WTC11 (cell line): ENCODE measurements at regions of chr7 and their contacts with region 1.

Region 1: DNA sequence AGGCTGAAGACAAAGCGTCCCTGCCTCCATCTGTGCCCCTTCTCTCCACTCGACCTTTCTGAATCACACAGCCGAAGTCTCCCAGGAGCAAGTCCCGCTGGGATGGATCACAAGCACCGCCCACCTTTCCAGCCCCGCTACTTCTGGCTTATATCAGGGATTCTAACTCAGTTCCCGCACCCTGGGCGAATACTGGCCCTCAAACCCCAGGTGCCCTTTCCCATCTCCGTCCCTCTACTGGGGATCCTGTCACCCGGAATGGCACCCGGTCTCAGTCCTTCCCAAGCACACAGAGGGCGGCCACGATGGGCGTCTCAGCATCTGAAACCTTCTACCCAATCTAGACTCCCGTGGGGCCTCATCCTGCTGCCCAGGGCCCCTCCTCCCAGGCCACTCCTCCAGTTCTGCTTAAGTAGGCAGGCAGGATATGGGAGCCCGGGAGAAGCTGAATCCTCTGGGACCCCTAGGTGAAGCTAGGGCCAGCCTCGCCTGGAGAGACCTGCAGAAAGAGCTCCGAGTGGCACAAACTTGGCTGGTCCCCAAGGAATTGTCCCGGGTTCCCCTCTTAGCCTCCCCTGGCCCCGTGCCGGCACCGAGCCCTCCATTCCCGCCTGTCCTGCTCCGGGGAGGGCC is 768 bp downstream of the KCP start:
- DNase-seq: peak; percentile 52
- ATAC-seq: peak; percentile 41
- H3K4me3 Mint-ChIP-seq: peak overlapping the region; percentile 72
- H3K27ac Mint-ChIP-seq: no peak overlapping the region
- H3K4me1 Mint-ChIP-seq: peaks cover 28% of the 10 kb centered on the region
- H3K27me3 Mint-ChIP-seq: peaks cover 62% of the 10 kb centered on the region
- CTCF ChIP-seq: no peak

Region 2: DNA sequence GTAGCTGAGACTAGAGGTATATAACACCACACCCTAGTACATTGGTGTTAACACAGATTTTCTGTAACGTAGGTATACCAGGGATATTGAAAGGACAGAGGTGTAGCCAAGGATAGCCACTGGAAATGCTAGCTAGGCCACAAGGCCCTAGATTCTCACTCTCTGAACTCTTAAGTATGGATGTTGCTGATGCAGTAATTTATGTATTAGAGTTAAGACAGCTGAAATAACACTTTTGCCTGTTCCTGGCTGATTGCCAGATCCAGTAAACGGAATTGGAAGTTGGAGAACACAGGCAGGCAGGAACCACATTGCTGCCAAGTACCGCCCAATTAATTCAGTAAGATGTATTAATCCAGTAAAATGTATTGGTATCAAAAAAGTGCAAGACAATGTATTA is 168.7 kb before region 1 on chr7:
- CTCF ChIA-PET with region 1: no interaction called
- POLR2A ChIA-PET with region 1: no interaction called
- DNase-seq: no peak
- ATAC-seq: no peak
- H3K4me3 Mint-ChIP-seq: peak overlapping the region; percentile 35
- H3K27ac Mint-ChIP-seq: no peak overlapping the region
- H3K4me1 Mint-ChIP-seq: peaks cover 22% of the 10 kb centered on the region
- H3K27me3 Mint-ChIP-seq: peaks cover 10% of the 10 kb centered on the region
- CTCF ChIP-seq: no peak

Region 3: GRCh38 chr7:128940494-128941322 is 31.0 kb after region 1 on chr7:
- CTCF ChIA-PET with region 1: interaction called, 15 read pairs
- POLR2A ChIA-PET with region 1: no interaction called
- DNase-seq: peak; percentile 42
- ATAC-seq: peak; percentile 12
- H3K4me3 Mint-ChIP-seq: no peak overlapping the region
- H3K27ac Mint-ChIP-seq: no peak overlapping the region
- H3K4me1 Mint-ChIP-seq: peaks cover 11% of the 10 kb centered on the region
- H3K27me3 Mint-ChIP-seq: peaks cover 52% of the 10 kb centered on the region
- CTCF ChIP-seq: no peak

Region 4: DNA sequence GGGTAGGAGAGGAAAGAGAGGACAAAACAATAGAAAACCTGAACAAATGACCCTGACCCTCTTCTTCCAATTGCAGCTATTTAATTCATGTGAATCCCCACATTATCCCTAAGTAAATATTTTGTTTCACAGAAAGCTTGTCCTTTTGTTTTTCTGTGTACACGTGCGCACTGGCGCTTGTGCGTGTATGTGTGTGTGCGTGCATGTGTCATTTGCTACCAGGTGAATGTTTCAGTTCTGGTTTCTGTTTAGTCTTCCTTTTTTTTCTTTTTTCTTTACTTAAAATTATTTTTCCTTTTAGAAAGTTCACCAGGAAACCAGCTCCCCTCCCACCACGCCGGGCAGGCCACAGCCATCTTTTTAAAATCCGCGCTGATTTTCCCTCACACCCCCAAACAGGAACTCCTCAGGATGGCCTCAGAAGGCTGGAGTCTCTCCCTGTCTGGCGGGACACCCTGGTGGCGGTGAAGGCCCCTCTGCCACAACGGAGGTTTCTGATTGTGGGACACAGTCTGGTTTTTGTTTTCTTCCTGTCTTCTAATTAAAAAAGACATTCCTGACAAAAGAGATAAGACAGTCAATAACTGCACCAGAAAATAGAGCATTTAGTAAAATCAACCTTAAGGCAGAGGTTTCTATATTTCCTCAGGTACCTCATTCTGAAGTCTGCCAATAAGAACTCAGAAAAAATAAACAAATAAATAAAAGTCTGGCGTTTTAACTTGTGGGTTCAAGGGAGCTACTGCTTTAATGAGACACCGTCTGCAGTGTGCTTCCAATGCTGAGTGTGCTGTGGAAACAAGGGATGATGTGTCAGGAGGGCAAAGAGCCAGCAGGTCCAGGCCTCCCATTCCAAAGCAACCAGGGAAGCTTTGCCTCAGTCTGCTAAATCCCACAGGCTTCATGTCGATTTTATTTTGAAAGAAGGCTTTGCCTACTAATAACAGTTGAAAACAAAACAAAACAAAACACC is 45.4 kb after region 1 on chr7:
- CTCF ChIA-PET with region 1: interaction called, 22 read pairs
- POLR2A ChIA-PET with region 1: no interaction called
- DNase-seq: no peak
- ATAC-seq: peak; percentile 66
- H3K4me3 Mint-ChIP-seq: peak overlapping the region; percentile 22; the same call in 1 of the 2 replicates
- H3K27ac Mint-ChIP-seq: peak overlapping the region; percentile 83
- H3K4me1 Mint-ChIP-seq: peaks cover 34% of the 10 kb centered on the region
- H3K27me3 Mint-ChIP-seq: no peaks in the 10 kb centered on the region
- CTCF ChIP-seq: no peak

Region 5: DNA sequence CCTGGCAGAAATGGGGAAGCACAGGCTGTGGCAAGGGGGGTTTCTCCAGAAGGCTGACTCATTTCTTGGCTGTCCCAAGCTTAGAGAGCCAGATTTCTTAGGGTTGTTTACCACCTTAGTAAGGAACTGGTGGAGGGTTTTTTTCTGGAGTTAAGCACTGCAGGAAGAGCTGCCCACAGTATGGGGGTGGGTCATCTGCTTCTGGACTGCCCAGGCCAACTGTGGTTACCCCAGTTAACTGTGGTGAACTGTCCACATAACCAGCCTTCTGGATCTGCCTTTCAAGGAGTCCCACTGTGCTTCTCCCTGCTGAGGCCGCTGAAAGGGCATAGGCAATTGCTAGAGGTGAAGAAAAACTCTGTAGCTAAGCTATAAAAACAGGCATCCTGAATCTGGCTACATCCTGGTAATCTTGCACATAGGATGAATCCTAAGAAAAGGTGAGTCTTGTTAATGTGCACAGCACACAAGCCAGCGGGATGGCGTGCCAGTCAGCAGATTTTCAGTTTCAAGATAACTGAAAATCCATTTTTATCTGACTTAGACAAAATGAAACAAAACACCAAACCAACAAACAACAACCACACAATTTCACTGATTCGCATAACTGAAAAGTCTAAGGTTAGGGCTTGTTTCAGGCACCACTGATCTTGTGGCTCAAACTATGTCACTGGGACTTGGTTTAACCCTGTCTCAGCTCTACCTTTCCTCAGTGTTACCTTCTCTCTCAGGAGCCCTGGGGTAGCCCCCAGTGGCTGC is 213.2 kb after region 1 on chr7:
- CTCF ChIA-PET with region 1: no interaction called
- POLR2A ChIA-PET with region 1: no interaction called
- DNase-seq: no peak
- ATAC-seq: no peak
- H3K4me3 Mint-ChIP-seq: no peak overlapping the region
- H3K27ac Mint-ChIP-seq: no peak overlapping the region
- H3K4me1 Mint-ChIP-seq: no peaks in the 10 kb centered on the region
- H3K27me3 Mint-ChIP-seq: peaks cover 28% of the 10 kb centered on the region
- CTCF ChIP-seq: no peak